ENCODE measurements at regions of chr7 and their contacts with region 1.

Region 1: DNA sequence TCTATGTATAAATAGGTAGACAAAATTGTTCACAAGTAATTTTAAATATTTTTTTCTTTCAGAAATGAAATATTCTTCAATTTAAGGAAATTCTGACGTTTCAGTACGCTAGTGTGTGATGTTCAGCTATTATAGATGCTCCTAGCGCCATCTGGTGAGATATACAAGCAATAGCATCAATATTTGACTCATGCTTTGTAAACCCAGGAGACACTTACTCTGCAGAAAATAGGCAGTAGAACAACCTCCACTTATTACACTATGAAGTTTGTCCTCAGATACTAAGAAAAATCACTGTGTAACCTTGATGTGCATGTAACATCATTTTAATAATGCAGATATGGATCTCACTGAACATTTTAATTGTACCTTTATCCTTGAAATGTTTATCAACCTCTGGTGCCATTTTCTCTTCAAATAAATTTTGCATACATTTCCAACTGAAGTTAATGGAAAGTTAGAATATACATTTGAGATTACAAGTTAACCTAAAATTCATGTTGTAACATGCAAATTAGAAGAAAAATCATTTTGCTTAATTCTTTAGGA is 151.5 kb upstream of the FAM3C start:
- DNase-seq: no peak
- ATAC-seq: no peak
- H3K4me3 ChIP-seq: no peak overlapping the region
- H3K27ac ChIP-seq: no peak overlapping the region
- H3K4me1 ChIP-seq: no peaks in the 10 kb centered on the region
- H3K27me3 ChIP-seq: no peaks in the 10 kb centered on the region

Region 2: DNA sequence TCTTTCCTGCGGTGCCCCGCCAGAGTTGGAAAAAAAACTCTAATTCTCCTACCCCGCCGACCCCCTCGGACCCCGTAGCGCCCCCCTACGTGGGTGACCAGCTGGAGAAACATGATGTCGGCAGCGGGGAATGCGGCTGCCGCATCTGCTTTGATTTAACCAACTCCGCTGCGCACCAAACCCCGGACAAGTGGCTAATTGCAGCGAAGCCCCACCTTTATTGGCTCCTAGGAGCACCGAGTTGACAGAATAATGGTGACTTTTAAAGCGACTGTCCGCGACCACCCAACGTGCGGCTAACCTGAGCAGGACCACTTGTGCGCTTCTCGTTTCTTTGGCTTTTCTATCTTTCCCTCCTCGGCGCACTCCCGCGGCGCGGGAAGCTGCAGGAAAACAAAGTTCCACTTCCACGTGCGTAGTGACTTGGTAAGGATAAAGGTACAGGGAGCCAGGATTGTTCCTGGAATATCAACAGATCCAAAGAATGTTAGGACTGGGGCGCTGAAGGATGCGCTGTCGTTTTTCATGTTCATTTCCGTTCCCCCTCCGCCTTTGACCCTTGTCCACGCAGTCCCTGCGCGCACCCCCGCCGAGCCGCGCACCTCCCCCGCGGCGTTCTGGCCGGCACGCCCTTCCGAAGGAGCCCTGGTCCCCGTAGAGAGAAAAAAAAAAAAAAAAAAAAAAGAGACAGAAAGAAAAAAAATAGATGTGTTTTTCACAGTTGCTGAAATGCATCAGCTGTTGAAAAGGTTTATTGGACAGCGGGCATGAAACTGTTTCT is 217.4 kb before region 1 on chr7:
- intact Hi-C with region 1: no loop called
- DNase-seq: no peak
- ATAC-seq: no peak
- H3K4me3 ChIP-seq: peak overlapping the region in 1 of 2 donors; percentile 16
- H3K27ac ChIP-seq: no peak overlapping the region
- H3K4me1 ChIP-seq: no peaks in the 10 kb centered on the region
- H3K27me3 ChIP-seq: no peaks in the 10 kb centered on the region

Region 3: DNA sequence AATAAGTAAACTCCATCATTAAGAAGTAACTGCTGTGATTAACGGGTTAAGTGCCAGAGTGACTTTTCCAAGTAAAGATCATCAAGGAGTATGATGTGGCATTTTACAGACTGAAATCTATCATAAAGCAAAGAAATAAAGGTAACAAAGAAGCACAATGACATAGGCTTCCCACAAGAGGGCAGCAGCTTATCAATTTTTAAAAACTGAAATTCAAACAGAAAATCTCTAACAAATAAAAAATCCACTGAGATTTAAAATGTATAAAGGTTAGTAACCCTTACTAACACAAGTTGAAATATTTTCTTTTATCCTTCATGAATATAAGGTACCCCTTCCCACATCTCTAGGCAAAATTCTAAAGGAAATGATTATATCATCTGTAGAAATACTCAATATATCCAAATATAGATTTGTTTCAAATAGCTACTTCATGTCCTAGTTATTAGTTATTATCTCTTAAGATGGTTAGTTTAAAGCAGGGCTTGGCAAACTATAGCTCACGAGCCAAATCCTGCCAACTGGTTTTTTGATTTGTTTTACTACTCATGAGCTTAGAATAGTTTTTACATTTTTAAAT is 180.7 kb before region 1 on chr7:
- intact Hi-C with region 1: loop called (anchors 1 kb)
- DNase-seq: no peak
- ATAC-seq: no peak
- H3K4me3 ChIP-seq: no peak overlapping the region
- H3K27ac ChIP-seq: no peak overlapping the region
- H3K4me1 ChIP-seq: no peaks in the 10 kb centered on the region
- H3K27me3 ChIP-seq: no peaks in the 10 kb centered on the region

Region 4: DNA sequence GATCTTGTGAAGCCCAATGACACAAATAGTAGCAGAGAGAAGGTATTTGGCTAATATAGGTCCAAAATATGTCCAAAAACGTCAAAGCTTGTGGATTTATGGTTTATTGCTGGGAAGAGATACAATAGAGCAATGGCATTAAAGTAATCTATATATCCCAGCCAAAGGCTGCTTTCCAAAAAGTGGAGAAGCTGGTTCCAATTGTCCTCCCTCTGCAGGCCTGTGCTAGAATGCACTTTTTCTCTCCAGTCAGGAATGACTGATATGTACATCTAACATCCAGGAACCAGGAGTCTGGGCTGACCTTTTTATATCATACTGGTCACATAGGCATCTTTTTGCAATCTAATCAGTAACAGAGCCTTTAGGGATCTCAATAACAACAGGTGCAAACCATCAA is 15.6 kb after region 1 on chr7:
- intact Hi-C with region 1: no loop called
- DNase-seq: no peak
- ATAC-seq: no peak
- H3K4me3 ChIP-seq: no peak overlapping the region
- H3K27ac ChIP-seq: no peak overlapping the region
- H3K4me1 ChIP-seq: no peaks in the 10 kb centered on the region
- H3K27me3 ChIP-seq: no peaks in the 10 kb centered on the region

Region 5: DNA sequence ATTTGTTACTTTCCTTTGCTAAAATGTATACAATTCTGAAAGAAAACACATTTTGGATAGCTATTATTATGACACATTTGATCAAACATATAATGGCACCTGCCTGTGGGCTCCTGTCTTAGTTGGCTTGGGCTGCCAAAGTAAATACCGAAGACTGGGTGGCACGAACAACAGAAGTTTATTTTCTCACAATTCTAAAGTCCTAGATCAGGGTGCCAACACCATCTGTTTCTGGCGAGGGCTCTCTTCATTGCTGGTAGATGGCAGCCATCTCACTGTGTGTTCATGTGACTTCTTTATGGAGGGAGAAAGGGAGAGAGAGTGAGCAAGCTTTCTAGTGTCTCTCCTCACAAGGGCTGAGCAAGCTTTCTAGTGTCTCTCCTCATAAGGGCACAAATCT is 44.3 kb after region 1 on chr7:
- intact Hi-C with region 1: no loop called
- DNase-seq: no peak
- ATAC-seq: no peak
- H3K4me3 ChIP-seq: no peak overlapping the region
- H3K27ac ChIP-seq: no peak overlapping the region
- H3K4me1 ChIP-seq: no peaks in the 10 kb centered on the region
- H3K27me3 ChIP-seq: no peaks in the 10 kb centered on the region

Region 6: DNA sequence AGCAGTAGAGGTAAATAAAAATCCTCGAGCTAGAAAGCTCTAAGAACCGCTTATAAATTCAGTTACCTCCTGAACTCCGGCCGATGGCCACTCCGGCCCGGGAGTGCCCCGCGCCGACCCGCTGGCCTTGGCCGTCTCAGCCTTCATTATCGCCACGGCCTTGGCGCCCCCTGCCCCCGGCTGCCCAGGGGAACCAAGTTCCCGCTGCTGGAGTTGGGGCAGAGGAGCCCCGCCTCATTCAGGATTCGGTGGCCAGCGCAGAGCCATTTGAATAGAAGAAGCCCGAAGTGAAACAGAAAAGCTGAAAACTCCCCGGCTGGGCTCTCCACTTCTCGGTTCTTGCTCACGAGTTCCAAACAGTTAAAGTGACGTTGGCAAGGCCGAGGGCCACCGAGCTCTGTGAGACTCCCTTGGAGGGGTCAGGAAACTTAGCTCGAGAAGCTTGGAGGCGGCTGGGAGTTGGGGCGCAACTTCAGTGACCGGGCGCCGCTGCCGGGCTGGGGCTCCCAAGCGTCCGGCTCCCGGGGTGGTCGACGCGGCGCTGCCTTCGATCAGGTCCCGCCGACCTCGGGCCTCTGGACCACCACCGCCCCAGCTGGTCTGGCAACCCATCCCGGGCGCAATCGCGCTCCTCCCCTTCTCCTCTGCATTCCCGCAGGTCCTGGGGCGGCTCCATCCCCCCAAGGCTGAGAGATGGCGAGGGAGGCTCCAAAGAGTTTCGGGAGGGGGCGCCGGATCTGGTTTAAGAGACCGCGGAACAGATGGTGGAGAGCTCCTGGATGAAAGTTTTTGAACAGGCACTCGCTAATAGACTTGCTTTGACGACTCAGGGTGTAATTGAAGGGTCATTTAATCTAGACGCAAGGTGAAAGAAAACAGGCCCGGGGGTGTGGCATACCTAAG is 762.8 kb after region 1 on chr7:
- intact Hi-C with region 1: no loop called
- DNase-seq: peak in 1 of 2 donors; percentile 44
- ATAC-seq: peak; percentile 26
- H3K4me3 ChIP-seq: peak overlapping the region in 1 of 2 donors; percentile 45
- H3K27ac ChIP-seq: no peak overlapping the region
- H3K4me1 ChIP-seq: no peaks in the 10 kb centered on the region
- H3K27me3 ChIP-seq: peaks cover 0 to 2% of the 10 kb centered on the region in 2 donors

Measured in aorta (tissue), 5 donors.